ENCODE measurements at regions of chr4 and their contacts with region 1.

Region 1: DNA sequence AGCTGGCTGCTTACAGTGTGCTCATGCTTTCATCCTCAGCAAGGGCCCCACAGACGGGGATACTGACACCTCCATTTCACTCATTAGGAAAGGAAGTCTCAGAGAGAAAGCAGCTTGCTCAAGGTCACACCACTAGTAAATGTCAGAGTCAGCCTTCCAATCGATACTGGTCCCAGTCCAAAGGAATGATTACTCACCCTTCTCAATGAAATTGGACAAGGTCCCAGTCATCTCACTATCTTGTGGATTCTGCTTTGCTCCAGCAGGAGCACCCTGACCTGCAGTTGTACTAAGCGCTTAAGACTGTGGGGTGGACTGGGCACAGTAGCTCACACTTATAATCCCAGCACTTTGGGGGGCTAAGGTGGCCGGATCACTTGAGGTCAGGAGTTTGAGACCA is 132.2 kb upstream of the SLC34A2 start:
- DNase-seq: no peak
- ATAC-seq: no peak

Region 2: GRCh38 chr4:26015133-26015651 is 491.8 kb after region 1 on chr4:
- intact Hi-C with region 1: loop called (anchors 10 kb)
- DNase-seq: peak; percentile 70
- ATAC-seq: peak; percentile 89

Measured in sciatic nerve (tissue), 2 donors.